ENCODE measurements at regions of chrX and their contacts with region 1.

Region 1: GRCh38 chrX:79259073-79259689 is 108.0 kb downstream of the ITM2A start:
- DNase-seq: peak; percentile 58
- H3K4me3 Mint-ChIP-seq: peak overlapping the region; percentile 57
- H3K27ac Mint-ChIP-seq: peak overlapping the region; percentile 91
- H3K4me1 Mint-ChIP-seq: peaks cover 81% of the 10 kb centered on the region
- H3K27me3 Mint-ChIP-seq: no peaks in the 10 kb centered on the region

Region 2: DNA sequence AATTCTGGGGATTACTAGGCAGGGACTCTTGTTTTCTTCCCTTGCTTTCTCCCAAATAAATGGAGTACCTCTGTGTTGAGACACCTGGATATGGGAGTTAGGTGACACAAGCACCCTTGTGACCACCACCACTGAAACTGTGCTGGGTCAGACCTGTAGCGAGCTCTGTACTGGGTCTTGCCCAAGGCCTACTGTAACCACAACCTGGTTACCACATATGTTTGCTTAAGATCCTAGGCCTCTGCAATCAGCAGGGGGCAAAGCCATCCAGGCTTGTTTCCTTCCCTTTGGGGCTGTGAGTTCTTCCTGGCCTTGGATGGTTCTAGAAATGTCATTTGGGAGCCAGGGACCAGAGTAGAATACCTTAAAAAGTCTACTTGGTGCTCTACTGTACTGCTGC is 462.3 kb before region 1 on chrX:
- CTCF ChIA-PET with region 1: no interaction called
- POLR2A ChIA-PET with region 1: no interaction called
- intact Hi-C with region 1: no loop called
- DNase-seq: no peak
- H3K4me3 Mint-ChIP-seq: no peak overlapping the region
- H3K27ac Mint-ChIP-seq: no peak overlapping the region
- H3K4me1 Mint-ChIP-seq: peaks cover 3% of the 10 kb centered on the region
- H3K27me3 Mint-ChIP-seq: no peaks in the 10 kb centered on the region

Region 3: DNA sequence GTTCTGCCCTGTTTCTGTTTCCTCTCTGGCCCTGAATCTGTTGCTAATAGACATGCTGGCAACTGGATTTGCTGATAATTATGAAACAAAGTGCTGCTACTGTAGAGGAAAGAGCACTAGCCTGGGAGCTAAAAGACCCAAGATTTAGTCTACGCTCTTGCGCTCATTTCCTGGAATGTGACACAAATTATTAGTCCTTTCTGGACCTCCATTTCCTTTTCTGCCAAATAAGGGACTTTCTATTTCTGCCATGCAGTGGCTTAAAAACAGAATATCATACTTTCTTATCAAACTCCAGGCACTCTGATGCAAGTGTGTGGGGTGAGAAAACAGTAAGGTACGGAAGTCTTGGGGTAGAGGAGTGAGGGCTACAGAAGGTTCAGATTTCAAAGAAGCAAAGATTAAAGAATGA is 163.0 kb before region 1 on chrX:
- CTCF ChIA-PET with region 1: no interaction called
- POLR2A ChIA-PET with region 1: interaction called, 4 read pairs
- intact Hi-C with region 1: loop called (anchors 2 kb)
- DNase-seq: no peak
- H3K4me3 Mint-ChIP-seq: peak overlapping the region; percentile 60
- H3K27ac Mint-ChIP-seq: peak overlapping the region; percentile 89
- H3K4me1 Mint-ChIP-seq: peaks cover 77% of the 10 kb centered on the region
- H3K27me3 Mint-ChIP-seq: no peaks in the 10 kb centered on the region

Region 4: DNA sequence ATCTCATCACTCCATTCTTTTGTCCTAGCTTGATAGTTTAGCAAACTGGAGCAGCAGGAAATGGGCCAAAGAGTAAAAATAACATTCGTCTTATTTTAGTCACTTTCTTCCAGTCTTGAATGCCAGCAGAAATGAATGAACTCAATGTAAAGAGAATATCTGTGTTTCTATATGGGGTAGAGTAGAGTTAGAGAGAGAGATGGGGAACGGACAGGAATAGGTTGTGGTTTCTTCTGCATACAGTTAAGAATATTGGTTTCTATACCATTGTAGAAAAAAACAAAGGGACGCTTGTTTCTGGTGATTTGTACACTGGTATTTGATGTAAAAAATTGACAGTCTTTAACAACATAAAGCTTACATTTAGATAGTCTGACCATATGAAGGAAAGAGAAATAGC is 105.8 kb before region 1 on chrX:
- CTCF ChIA-PET with region 1: no interaction called
- POLR2A ChIA-PET with region 1: interaction called, 11 read pairs
- intact Hi-C with region 1: loop called (anchors 5 kb)
- DNase-seq: no peak
- H3K4me3 Mint-ChIP-seq: peak overlapping the region; percentile 75
- H3K27ac Mint-ChIP-seq: peak overlapping the region; percentile 94
- H3K4me1 Mint-ChIP-seq: peaks cover 62% of the 10 kb centered on the region
- H3K27me3 Mint-ChIP-seq: no peaks in the 10 kb centered on the region

Region 5: DNA sequence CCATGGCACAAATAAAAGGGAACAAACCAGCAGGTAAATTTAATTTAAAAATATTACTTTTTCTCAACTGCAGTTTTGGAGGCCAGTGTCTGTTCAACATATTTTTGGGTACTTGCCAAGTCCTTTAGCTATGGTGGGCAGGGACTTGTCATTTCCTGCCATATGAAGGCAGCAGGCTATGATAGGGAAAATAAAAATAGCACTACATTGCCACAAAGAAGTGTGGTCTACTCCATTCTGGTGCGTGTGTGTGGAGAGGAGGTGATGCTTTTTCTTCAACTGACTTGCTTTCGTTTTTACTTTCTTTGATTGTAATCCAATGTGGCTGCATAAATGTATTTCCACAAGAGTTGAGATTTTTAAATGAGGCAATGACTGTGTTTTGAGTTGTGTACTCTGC is 97.5 kb before region 1 on chrX:
- CTCF ChIA-PET with region 1: no interaction called
- POLR2A ChIA-PET with region 1: interaction called, 11 read pairs
- intact Hi-C with region 1: loop called (anchors 2 kb)
- DNase-seq: peak; percentile 50
- H3K4me3 Mint-ChIP-seq: peak overlapping the region; percentile 81
- H3K27ac Mint-ChIP-seq: peak overlapping the region; percentile 98
- H3K4me1 Mint-ChIP-seq: peaks cover 55% of the 10 kb centered on the region
- H3K27me3 Mint-ChIP-seq: no peaks in the 10 kb centered on the region

Region 6: DNA sequence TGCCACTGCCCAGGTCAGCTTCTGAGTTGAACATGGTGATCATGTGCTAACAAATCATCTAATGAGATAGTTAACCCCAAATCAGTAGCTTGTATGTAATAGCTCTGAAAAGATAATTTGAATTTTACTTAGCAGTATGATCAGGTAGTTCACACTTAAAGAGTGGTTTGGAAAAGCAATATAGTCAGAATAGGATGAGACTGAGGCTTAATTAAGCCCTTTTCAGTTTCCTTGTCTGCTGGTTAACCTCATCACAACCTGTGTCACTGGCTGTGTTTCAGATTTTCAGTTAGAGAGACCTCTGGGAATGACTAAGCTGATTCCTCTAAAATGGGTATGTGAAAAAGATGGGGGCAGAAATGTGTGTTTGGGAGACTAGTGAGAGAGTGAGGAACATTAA is 76.6 kb before region 1 on chrX:
- CTCF ChIA-PET with region 1: interaction called, 3 read pairs
- POLR2A ChIA-PET with region 1: interaction called, 5 read pairs
- intact Hi-C with region 1: loop called (anchors 1 kb)
- DNase-seq: peak; percentile 19
- H3K4me3 Mint-ChIP-seq: peak overlapping the region; percentile 61
- H3K27ac Mint-ChIP-seq: peak overlapping the region; percentile 91
- H3K4me1 Mint-ChIP-seq: peaks cover 66% of the 10 kb centered on the region
- H3K27me3 Mint-ChIP-seq: no peaks in the 10 kb centered on the region

Region 7: GRCh38 chrX:79235899-79236298 is 23.3 kb before region 1 on chrX:
- CTCF ChIA-PET with region 1: no interaction called
- POLR2A ChIA-PET with region 1: no interaction called
- intact Hi-C with region 1: loop called (anchors 2 kb)
- DNase-seq: no peak
- H3K4me3 Mint-ChIP-seq: no peak overlapping the region
- H3K27ac Mint-ChIP-seq: peak overlapping the region; percentile 76
- H3K4me1 Mint-ChIP-seq: peaks cover 55% of the 10 kb centered on the region
- H3K27me3 Mint-ChIP-seq: no peaks in the 10 kb centered on the region

Region 8: GRCh38 chrX:79366873-79367749 is 107.9 kb after region 1 on chrX and contains the start of gene ITM2A:
- CTCF ChIA-PET with region 1: no interaction called
- POLR2A ChIA-PET with region 1: interaction called, 3 read pairs
- intact Hi-C with region 1: loop called (anchors 5 kb)
- DNase-seq: peak; percentile 75
- H3K4me3 Mint-ChIP-seq: peak within 1 kb of the TSS; percentile 95
- H3K27ac Mint-ChIP-seq: peak within 1 kb of the TSS; percentile 95
- H3K4me1 Mint-ChIP-seq: peaks cover 24% of the 10 kb centered on the region
- H3K27me3 Mint-ChIP-seq: no peaks in the 10 kb centered on the region
- total RNA-seq, gene ITM2A: 87.7 to 98.1 TPM